ENCODE measurements at regions of chr12 and their contacts with region 1.

Region 1: DNA sequence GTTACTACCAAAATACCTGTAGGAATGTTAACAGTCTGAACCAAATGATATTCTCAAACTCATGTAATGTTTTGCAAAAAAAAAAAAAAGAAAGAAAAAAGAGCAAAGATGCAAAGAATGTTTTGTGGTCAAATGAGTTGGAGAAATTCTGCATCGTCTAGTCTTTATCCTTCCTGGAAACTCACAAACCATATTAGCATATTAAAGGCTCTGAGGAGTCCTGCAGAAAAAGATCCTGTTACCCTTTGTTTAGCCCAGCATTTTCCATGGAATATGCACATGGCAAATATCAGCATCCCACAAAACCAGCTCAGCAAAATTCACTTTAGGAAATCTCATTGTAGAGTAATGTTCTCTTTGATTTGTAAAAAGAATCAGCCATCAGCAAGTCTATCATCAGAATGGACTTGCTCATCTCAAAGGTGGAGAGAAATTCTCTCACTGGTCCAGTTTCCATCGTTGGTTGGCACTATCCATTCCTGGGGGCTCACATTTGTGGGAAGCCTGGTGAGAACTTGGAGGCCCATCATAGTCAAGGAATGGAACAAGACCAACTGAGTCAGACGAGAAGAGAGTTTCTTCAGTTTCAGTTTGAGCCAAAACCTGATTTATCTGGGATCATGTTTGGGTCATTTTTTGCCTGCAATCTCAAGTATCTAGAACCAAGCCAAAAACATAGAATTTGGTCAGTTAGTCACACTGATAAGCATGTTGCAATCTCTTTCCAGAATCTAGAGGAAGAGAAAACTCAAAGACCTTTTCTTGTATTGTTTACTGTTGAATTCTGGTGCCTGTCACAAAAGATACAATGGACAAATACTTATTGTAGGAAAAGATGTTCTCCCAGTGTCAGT is 129.8 kb downstream of the TBX5 start:
- DNase-seq: peak; percentile 12
- ATAC-seq: no peak
- H3K4me3 ChIP-seq: no peak overlapping the region
- H3K27ac ChIP-seq: no peak overlapping the region
- H3K4me1 ChIP-seq: no peaks in the 10 kb centered on the region
- H3K27me3 ChIP-seq: peaks cover 12% of the 10 kb centered on the region
- CTCF ChIP-seq: no peak
- POLR2A ChIP-seq: no peak
- RAD21 ChIP-seq: no peak

Region 2: DNA sequence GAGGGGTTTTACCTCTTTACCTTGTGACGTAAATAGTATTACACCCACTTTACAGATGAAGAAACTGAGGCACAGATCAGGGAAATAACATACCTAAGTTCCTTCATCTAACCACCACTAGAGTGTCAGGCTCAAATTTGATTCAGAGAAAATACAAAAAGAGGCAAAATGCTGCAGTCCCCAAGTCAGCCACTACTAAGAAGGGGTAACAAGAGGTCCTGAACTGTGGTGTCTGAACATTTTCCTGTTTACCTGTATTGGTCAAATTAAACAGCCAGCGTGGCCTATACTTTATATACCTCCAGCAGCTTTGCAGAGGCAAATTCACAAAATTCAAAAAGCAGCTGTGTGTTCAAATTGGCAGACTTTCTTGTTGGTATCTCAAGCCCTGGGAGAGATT is 37.8 kb after region 1 on chr12:
- CTCF ChIA-PET with region 1: no interaction called
- POLR2A ChIA-PET with region 1: interaction called, 3 read pairs
- dilution Hi-C with region 1: no loop called
- in situ Hi-C with region 1: no loop called
- intact Hi-C with region 1: loop called (anchors 1 kb)
- DNase-seq: no peak
- ATAC-seq: no peak
- H3K4me3 ChIP-seq: no peak overlapping the region
- H3K27ac ChIP-seq: no peak overlapping the region
- H3K4me1 ChIP-seq: peaks cover 2% of the 10 kb centered on the region
- H3K27me3 ChIP-seq: no peaks in the 10 kb centered on the region
- CTCF ChIP-seq: no peak
- POLR2A ChIP-seq: no peak
- RAD21 ChIP-seq: no peak